Gastrocnemius medialis (tissue), 4 donors: ENCODE measurements at regions of chr4 and their contacts with region 1.

Region 1: DNA sequence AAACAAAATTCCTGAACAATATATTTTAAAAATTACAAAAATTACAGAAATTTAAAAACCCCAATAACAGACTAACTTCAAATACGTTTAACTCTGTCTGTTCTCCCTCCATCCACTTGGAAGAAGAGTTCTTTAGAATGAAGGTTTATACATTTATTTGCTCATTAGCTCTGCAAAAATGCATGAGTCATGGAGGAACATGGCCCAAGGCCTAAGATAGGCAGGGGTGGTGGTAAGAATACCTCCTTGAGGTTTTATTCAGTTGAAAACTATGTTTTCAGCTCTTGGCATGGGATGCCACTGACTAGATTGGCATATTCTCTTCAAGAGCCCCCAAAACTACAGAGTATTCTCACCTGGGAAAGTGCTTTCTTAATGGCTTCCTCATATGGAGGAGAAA is 8.8 kb upstream of the LRRC66 start:
- DNase-seq: no peak
- ATAC-seq: no peak
- H3K4me3 ChIP-seq: no peak overlapping the region
- H3K27ac ChIP-seq: peak overlapping the region in 1 of 4 donors; percentile 41
- H3K4me1 ChIP-seq: peaks cover 11 to 12% of the 10 kb centered on the region in 2 donors
- H3K27me3 ChIP-seq: no peaks in the 10 kb centered on the region
- CTCF ChIP-seq: no peak
- POLR2A ChIP-seq: no peak

Region 2: GRCh38 chr4:51831133-51831532 is 197.8 kb before region 1 on chr4:
- in situ Hi-C with region 1: loop called in 1 of 4 experiments (anchors 5 kb)
- intact Hi-C with region 1: loop called (anchors 1 kb)
- DNase-seq: peak; percentile 34 to 64
- ATAC-seq: peak; percentile 69 to 83
- H3K4me3 ChIP-seq: no peak overlapping the region
- H3K27ac ChIP-seq: no peak overlapping the region
- H3K4me1 ChIP-seq: no peaks in the 10 kb centered on the region
- H3K27me3 ChIP-seq: no peaks in the 10 kb centered on the region
- CTCF ChIP-seq: peak; percentile 57 to 81 (median 71)
- POLR2A ChIP-seq: no peak

Region 3: GRCh38 chr4:51836549-51836948 is 192.4 kb before region 1 on chr4:
- in situ Hi-C with region 1: loop called in 1 of 4 experiments (anchors 5 kb)
- intact Hi-C with region 1: loop called (anchors 1 kb)
- DNase-seq: no peak
- ATAC-seq: no peak
- H3K4me3 ChIP-seq: no peak overlapping the region
- H3K27ac ChIP-seq: no peak overlapping the region
- H3K4me1 ChIP-seq: no peaks in the 10 kb centered on the region
- H3K27me3 ChIP-seq: no peaks in the 10 kb centered on the region
- CTCF ChIP-seq: no peak
- POLR2A ChIP-seq: no peak

Region 4: DNA sequence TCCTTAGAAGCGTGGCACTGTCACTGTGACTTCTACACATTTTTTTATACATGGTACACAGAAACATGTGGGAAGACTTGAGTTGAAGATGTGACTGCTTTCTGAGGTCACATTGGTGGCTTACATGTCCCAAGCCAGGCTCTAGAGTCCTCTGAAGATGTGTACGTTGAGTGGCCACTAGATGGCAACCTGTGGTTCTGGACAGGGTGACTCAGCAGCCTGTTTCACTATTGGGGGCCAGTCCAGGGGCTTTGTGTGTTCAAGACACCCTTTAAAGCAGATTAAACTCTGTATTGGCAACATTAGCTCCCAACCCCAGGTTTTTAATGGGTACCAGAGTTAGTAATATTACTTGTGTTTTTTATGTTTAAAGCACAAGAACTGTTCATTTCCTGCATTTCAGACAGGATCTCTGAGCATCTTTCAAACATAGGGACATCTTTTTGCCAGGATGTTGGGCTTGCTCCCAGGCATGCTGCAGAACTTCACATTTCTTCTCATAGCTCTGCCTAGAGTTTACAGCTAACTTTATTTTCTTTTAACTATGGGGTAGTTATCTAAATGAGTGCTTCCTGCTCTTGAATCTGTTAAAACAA is 133.1 kb before region 1 on chr4:
- in situ Hi-C with region 1: loop called in 1 of 4 experiments (anchors 25 kb)
- intact Hi-C with region 1: loop called (anchors 5 kb)
- DNase-seq: peak; percentile 41 to 76
- ATAC-seq: peak; percentile 86 to 99
- H3K4me3 ChIP-seq: no peak overlapping the region
- H3K27ac ChIP-seq: peak overlapping the region; percentile 49 to 70 (median 62)
- H3K4me1 ChIP-seq: peaks cover 12 to 20% of the 10 kb centered on the region in 2 donors
- H3K27me3 ChIP-seq: no peaks in the 10 kb centered on the region
- CTCF ChIP-seq: peak; percentile 54 to 78 (median 72)
- POLR2A ChIP-seq: no peak